Right ventricle myocardium inferior (tissue), 1 donor: ENCODE measurements at regions of chr19 and their contacts with region 1.

Region 1: GRCh38 chr19:20565321-20566018 is at the start of gene ZNF737:
- DNase-seq: peak; percentile 94
- ATAC-seq: peak; percentile 97
- total RNA-seq, gene ZNF737: 6.0 TPM

Region 2: GRCh38 chr19:20482721-20483120 is 82.7 kb before region 1 on chr19:
- intact Hi-C with region 1: no loop called
- DNase-seq: no peak
- ATAC-seq: no peak

Region 3: DNA sequence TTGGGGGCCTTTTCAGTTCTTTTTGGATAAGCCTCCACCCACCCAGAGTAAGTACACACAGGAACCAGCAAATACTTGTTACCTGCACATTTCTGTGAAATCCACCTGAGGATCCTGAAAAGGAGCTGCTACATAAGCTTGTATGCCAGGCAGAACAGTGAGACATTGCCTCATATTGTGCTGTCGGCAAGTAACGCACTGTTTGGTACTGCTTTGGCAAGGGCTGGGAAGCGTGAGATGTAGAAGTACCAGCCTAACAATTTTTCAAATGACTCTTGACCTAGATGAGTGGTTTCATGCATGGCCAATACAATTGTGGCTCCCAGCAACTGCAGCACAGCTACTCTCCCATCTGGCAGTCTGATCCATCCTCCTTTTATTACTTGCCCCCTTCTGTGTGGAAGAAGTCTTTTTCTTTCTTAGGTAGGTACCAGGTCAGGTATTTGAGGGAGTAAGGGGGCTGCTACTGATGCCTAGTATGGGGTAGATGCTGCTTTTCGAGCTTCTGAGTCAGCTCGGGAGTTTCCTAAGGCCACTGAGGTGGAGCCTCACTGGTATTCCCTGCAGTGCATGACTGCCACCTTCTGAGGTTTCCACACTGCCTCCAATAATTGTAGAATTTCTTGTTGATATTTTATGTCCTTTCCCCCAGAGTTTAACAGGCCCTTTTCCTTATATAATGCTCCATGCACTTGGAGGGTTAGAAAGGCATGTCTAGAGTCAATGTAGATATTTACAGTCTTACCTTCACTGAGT is 52.1 kb before region 1 on chr19:
- intact Hi-C with region 1: no loop called
- DNase-seq: no peak
- ATAC-seq: no peak

Region 4: GRCh38 chr19:20661150-20661819 is 95.8 kb after region 1 on chr19 and contains the start of gene ZNF626:
- intact Hi-C with region 1: loop called (anchors 1 kb)
- DNase-seq: peak; percentile 95
- ATAC-seq: peak; percentile 99
- total RNA-seq, gene ZNF626: 7.5 TPM

Region 5: DNA sequence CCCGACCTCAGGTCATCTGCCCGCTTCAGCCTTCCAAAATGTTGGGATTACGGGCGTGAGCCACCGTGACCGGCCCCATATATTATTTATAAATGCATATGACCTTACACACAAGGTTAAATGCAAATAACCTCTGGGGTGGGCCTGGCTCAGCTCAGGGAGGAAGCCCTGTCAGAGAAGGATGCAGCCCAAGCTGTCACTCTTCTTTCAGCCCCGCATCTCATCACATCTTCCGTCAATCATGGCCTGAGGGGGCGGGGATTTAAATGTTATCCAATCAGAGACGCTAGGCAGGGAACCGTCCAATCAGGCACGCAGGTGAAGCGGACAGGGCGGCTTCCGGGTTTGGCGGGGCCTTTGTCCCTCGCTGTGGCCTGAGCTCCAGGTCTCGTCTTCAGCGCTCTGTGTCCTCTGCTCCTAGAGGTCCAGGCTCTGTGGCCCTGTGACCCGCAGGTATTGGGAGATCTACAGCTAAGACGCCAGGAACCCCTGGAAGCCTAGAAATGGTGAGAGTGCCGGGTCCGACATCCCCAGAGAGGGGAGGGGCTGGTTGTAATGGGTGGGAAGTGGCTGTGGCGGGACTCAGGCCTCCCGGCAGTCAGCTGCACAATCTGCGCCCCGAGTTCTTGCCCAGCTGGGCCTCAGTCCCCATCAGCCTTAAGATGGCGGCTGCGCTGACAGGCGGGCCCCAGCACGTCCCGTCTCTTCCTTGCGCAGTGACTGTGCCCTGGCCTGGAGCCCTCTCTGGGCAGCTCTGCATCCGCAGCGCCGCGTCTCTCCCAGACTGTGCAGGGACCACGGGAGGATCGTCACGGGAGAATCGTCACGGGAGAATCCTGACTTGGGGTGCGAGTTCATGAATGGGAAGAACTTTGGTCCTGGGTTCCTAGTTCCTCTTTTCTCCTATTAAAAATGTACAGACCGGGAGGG is 455.1 kb after region 1 on chr19 and contains the start of gene ZNF430:
- intact Hi-C with region 1: loop called (anchors 10 kb)
- DNase-seq: peak; percentile 92
- ATAC-seq: peak; percentile 100
- total RNA-seq, gene ZNF430: 4.0 TPM

Region 6: GRCh38 chr19:21082011-21082975 is 516.8 kb after region 1 on chr19 and contains the start of gene ZNF714:
- intact Hi-C with region 1: loop called (anchors 10 kb)
- DNase-seq: peak; percentile 86
- ATAC-seq: peak; percentile 98
- total RNA-seq, gene ZNF714: 2.7 TPM